WTC11 (cell line): ENCODE measurements at regions of chr22 and their contacts with region 1.

Region 1: DNA sequence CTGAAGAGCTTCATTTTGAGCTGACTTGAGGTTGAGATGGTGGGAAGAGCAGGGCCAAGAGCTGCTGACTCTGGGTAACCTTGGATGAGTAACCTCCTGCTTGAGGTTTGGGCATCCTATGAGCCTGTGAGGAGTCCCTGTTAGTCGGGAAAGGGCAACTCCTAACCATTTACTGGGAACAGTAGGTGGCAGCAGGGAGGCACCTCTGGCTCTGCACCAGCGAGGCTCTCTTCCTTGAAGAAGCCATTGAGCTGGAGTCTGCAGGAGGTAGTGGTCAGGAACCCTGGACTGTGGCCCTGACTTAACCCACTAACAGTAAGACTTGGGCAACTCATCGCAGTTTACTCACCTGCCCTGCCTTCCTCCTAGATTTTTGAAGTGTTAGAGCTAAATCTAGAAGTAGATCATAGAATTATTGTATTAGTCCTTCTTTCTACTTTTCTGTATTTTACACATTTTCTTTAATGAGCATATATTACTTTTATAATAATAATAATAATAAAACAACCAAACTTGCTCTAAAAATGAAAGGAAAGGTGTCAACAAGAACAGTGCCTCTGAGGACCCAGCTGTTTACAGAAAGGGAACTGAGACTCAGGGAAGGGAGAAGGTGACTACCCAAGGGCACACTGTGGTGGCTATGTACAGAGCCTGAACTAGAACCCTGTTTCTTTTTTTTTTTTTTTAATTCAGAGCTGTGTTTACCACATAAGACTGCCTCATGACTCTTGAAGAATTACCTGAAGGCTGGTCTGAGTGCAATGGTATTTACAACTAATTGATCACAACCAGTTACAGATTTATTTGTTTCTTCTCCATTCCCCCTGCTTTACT is 47.5 kb downstream of the MEI1 start:
- DNase-seq: peak; percentile 78
- ATAC-seq: peak; percentile 99
- H3K4me3 Mint-ChIP-seq: no peak overlapping the region
- H3K27ac Mint-ChIP-seq: no peak overlapping the region
- H3K4me1 Mint-ChIP-seq: no peaks in the 10 kb centered on the region
- H3K27me3 Mint-ChIP-seq: peaks cover 4% of the 10 kb centered on the region
- CTCF ChIP-seq: peak; percentile 50

Region 2: DNA sequence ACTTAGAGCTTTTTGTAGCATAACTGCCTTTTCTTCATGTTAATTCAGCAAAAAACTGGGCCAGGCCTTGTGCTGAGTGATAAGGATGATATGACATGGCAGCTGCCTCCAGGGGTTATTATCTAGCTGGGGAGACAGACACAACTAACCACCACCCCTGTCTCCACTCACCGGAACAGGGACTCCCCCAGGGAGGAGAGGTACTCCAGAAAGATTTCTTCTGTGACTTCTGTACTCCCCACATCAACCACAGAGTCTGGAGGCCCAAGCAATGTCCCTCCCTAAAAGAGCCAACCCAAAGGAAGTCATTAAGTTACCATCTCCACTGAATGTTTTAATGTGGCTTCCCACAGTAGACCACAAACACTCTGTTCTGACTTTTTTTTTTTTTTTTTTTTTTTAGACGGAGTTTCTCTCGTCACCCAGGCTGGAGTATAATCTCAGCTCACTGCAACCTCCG is 142.9 kb before region 1 on chr22:
- CTCF ChIA-PET with region 1: no interaction called
- POLR2A ChIA-PET with region 1: no interaction called
- DNase-seq: no peak
- ATAC-seq: no peak
- H3K4me3 Mint-ChIP-seq: no peak overlapping the region
- H3K27ac Mint-ChIP-seq: no peak overlapping the region
- H3K4me1 Mint-ChIP-seq: no peaks in the 10 kb centered on the region
- H3K27me3 Mint-ChIP-seq: no peaks in the 10 kb centered on the region
- CTCF ChIP-seq: no peak

Region 3: GRCh38 chr22:41674896-41675295 is 71.9 kb before region 1 on chr22:
- CTCF ChIA-PET with region 1: no interaction called
- POLR2A ChIA-PET with region 1: no interaction called
- DNase-seq: no peak
- ATAC-seq: no peak
- H3K4me3 Mint-ChIP-seq: no peak overlapping the region
- H3K27ac Mint-ChIP-seq: no peak overlapping the region
- H3K4me1 Mint-ChIP-seq: no peaks in the 10 kb centered on the region
- H3K27me3 Mint-ChIP-seq: no peaks in the 10 kb centered on the region
- CTCF ChIP-seq: no peak

Region 4: GRCh38 chr22:41757502-41757901 is 10.7 kb after region 1 on chr22:
- CTCF ChIA-PET with region 1: interaction called, 50 read pairs
- POLR2A ChIA-PET with region 1: no interaction called
- DNase-seq: no peak
- ATAC-seq: no peak
- H3K4me3 Mint-ChIP-seq: no peak overlapping the region
- H3K27ac Mint-ChIP-seq: no peak overlapping the region
- H3K4me1 Mint-ChIP-seq: peaks cover 14% of the 10 kb centered on the region
- H3K27me3 Mint-ChIP-seq: no peaks in the 10 kb centered on the region
- CTCF ChIP-seq: no peak

Region 5: GRCh38 chr22:41768430-41768829 is 21.6 kb after region 1 on chr22:
- CTCF ChIA-PET with region 1: interaction called, 29 read pairs
- POLR2A ChIA-PET with region 1: no interaction called
- DNase-seq: no peak
- ATAC-seq: no peak
- H3K4me3 Mint-ChIP-seq: no peak overlapping the region
- H3K27ac Mint-ChIP-seq: no peak overlapping the region
- H3K4me1 Mint-ChIP-seq: no peaks in the 10 kb centered on the region
- H3K27me3 Mint-ChIP-seq: no peaks in the 10 kb centered on the region; the same call in none of the 2 replicates
- CTCF ChIP-seq: no peak

Region 6: DNA sequence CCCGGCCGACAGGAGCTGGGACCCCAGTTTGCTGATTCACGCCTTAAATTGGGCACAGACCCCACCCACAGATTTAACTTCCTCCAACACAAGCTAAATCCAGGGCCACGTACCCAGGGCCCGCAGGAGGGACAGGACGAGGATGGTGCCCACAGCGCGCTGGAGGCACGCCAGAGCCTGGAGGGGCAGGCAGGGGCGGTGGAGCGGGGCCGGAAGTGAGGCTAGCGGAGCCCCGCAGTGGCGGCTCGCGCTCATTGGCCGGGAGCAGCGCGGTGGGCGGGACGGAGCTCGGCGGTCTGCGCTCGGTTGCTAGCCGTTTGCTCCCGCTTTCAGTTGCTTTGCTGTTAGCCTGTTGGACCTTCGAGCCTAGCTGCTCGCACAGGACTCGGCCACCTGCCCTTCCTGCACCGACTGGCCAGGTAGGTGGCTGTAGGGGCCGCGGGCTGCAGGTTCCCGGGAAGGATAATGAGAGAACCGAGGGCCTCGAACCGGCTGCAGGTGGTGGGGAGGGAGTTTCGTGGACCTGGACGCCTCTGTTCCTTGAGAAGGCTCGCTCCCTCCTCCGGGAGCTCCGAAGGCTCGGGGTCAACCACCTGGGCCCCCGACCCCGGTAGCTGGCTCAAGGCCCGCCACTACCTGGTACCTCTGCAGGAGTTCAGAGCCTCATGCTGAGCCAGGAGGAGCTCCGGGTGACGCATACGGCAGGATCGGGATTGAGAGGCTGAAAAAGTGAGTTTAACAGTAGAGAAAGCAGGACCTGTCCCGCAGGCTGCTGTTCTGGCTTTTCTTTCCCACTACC is 53.8 kb after region 1 on chr22 and contains the start of gene CCDC134:
- CTCF ChIA-PET with region 1: interaction called, 38 read pairs
- POLR2A ChIA-PET with region 1: no interaction called
- DNase-seq: peak; percentile 91
- ATAC-seq: peak; percentile 95
- H3K4me3 Mint-ChIP-seq: peak within 1 kb of the TSS; percentile 96
- H3K27ac Mint-ChIP-seq: peak within 1 kb of the TSS; percentile 98
- H3K4me1 Mint-ChIP-seq: peaks cover 30% of the 10 kb centered on the region
- H3K27me3 Mint-ChIP-seq: no peaks in the 10 kb centered on the region
- CTCF ChIP-seq: no peak
- total RNA-seq, gene CCDC134: 19.0 to 21.3 TPM (median 19.2 TPM) in 3 replicates

Region 7: GRCh38 chr22:41857155-41857859 is 110.5 kb after region 1 on chr22:
- CTCF ChIA-PET with region 1: interaction called, 20 read pairs
- POLR2A ChIA-PET with region 1: no interaction called
- DNase-seq: peak; percentile 69
- ATAC-seq: peak; percentile 93
- H3K4me3 Mint-ChIP-seq: no peak overlapping the region
- H3K27ac Mint-ChIP-seq: peak overlapping the region; percentile 86
- H3K4me1 Mint-ChIP-seq: peaks cover 25% of the 10 kb centered on the region
- H3K27me3 Mint-ChIP-seq: no peaks in the 10 kb centered on the region
- CTCF ChIP-seq: peak; percentile 43; the same call in 1 of the 2 replicates

Region 8: GRCh38 chr22:41946629-41947423 is 200.0 kb after region 1 on chr22 and contains the start of gene CENPM:
- CTCF ChIA-PET with region 1: interaction called, 10 read pairs
- POLR2A ChIA-PET with region 1: no interaction called
- DNase-seq: peak; percentile 95
- ATAC-seq: peak; percentile 93
- H3K4me3 Mint-ChIP-seq: peak within 1 kb of the TSS; percentile 73
- H3K27ac Mint-ChIP-seq: peak within 1 kb of the TSS; percentile 49; the same call in 1 of the 2 replicates
- H3K4me1 Mint-ChIP-seq: peaks cover 46% of the 10 kb centered on the region
- H3K27me3 Mint-ChIP-seq: peaks cover 4% of the 10 kb centered on the region; the same call in 1 of the 2 replicates
- CTCF ChIP-seq: no peak
- total RNA-seq, gene CENPM: 40.3 to 43.7 TPM (median 41.7 TPM) in 3 replicates